Endothelial cell of umbilical vein (primary cell): ENCODE measurements at regions of chr4 and their contacts with region 1.

Region 1: GRCh38 chr4:154618708-154619315 is 6.4 kb upstream of the FGG start:
- DNase-seq: peak; percentile 52
- H3K4me3 ChIP-seq: no peak overlapping the region
- H3K27ac ChIP-seq: no peak overlapping the region
- H3K4me1 ChIP-seq: no peaks in the 10 kb centered on the region
- H3K27me3 ChIP-seq: peaks cover 0 to 4% of the 10 kb centered on the region in 2 experiments
- CTCF ChIP-seq: peak; percentile 58 to 64
- POLR2A ChIP-seq: no peak

Region 2: GRCh38 chr4:153785910-153786721 is 832.7 kb before region 1 on chr4:
- CTCF ChIA-PET with region 1: interaction called, 8 read pairs
- POLR2A ChIA-PET with region 1: no interaction called
- dilution Hi-C with region 1: no loop called
- intact Hi-C with region 1: loop called (anchors 5 kb)
- DNase-seq: peak; percentile 20
- H3K4me3 ChIP-seq: no peak overlapping the region
- H3K27ac ChIP-seq: no peak overlapping the region
- H3K4me1 ChIP-seq: peaks cover under 1% of the 10 kb centered on the region
- H3K27me3 ChIP-seq: peaks cover 47 to 58% of the 10 kb centered on the region in 2 experiments
- CTCF ChIP-seq: peak; percentile 7 to 11
- POLR2A ChIP-seq: no peak

Region 3: GRCh38 chr4:154566639-154567204 is 52.1 kb before region 1 on chr4:
- CTCF ChIA-PET with region 1: interaction called, 15 read pairs
- POLR2A ChIA-PET with region 1: no interaction called
- dilution Hi-C with region 1: no loop called
- intact Hi-C with region 1: no loop called
- DNase-seq: no peak
- H3K4me3 ChIP-seq: no peak overlapping the region
- H3K27ac ChIP-seq: no peak overlapping the region
- H3K4me1 ChIP-seq: no peaks in the 10 kb centered on the region
- H3K27me3 ChIP-seq: peaks cover 0 to 6% of the 10 kb centered on the region in 2 experiments
- CTCF ChIP-seq: no peak
- POLR2A ChIP-seq: no peak

Region 4: GRCh38 chr4:154602404-154603020 is 16.3 kb before region 1 on chr4:
- CTCF ChIA-PET with region 1: interaction called, 18 read pairs
- POLR2A ChIA-PET with region 1: no interaction called
- dilution Hi-C with region 1: no loop called
- intact Hi-C with region 1: no loop called
- DNase-seq: no peak
- H3K4me3 ChIP-seq: no peak overlapping the region
- H3K27ac ChIP-seq: no peak overlapping the region
- H3K4me1 ChIP-seq: no peaks in the 10 kb centered on the region
- H3K27me3 ChIP-seq: no peaks in the 10 kb centered on the region
- CTCF ChIP-seq: no peak
- POLR2A ChIP-seq: no peak